SK-N-SH (cell line): ENCODE measurements at regions of chr17 and their contacts with region 1.

Region 1: GRCh38 chr17:81959362-81960129 is 1.4 kb downstream of the NOTUM start:
- DNase-seq: peak; percentile 96
- H3K4me3 ChIP-seq: peak overlapping the region; percentile 40 to 49
- H3K27ac ChIP-seq: no peak overlapping the region
- H3K4me1 ChIP-seq: peaks cover 0 to 25% of the 10 kb centered on the region in 2 experiments; a peak in 1 of 4 replicates
- H3K27me3 ChIP-seq: peaks cover 18% of the 10 kb centered on the region
- CTCF ChIP-seq: peak; percentile 62
- EP300 ChIP-seq: peak in 1 of 2 experiments; percentile 17; a peak in 1 of 4 replicates
- RAD21 ChIP-seq: peak; percentile 92

Region 2: DNA sequence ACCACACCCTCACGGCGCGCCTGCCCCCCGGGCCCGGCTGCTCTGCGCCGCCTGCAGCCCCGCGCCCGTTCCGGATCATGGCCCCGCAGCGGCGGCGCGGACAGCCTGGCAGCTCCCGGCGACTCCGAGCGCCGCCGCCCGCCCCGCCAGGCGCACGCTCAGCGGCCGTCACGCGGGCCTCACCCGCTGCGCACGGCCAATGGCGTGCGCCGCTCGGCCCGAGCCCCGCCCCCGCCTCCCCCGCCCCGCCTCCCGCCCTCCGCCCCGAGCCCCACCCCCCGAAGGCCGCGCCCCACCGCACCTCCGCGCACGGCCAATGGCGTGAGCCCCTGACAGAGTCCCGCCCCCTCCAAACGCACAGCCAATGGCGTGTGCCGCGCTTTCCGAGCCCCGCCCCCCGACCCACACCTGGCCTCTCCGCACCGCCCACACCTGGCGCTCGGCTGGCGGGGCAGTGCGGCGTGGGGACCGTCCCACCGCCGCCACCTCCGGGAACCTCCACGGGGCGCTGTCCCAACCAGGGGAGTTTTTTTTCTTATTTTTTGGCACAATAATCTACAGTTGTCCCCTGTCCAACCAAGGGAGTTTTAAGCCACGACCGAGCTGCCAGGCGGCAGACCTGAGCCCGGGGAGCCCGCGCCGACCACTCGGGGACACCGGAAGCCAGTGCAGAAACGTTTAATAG is 48.1 kb before region 1 on chr17 and contains the start of gene PCYT2:
- CTCF ChIA-PET with region 1: interaction called, 14 read pairs
- POLR2A ChIA-PET with region 1: no interaction called
- DNase-seq: peak; percentile 100
- H3K4me3 ChIP-seq: peak within 1 kb of the TSS; percentile 85 to 96
- H3K27ac ChIP-seq: peak within 1 kb of the TSS in 1 of 2 experiments; percentile 44; a peak in 2 of 4 replicates
- H3K4me1 ChIP-seq: peaks cover 8 to 19% of the 10 kb centered on the region in 2 experiments; a peak in 2 of 4 replicates
- H3K27me3 ChIP-seq: no peaks in the 10 kb centered on the region
- CTCF ChIP-seq: peak; percentile 10; the same call in 1 of the 2 replicates
- EP300 ChIP-seq: no peak
- RAD21 ChIP-seq: no peak
- polyA plus RNA-seq, gene PCYT2: 46.2 and 54.1 TPM in 2 replicates

Region 3: DNA sequence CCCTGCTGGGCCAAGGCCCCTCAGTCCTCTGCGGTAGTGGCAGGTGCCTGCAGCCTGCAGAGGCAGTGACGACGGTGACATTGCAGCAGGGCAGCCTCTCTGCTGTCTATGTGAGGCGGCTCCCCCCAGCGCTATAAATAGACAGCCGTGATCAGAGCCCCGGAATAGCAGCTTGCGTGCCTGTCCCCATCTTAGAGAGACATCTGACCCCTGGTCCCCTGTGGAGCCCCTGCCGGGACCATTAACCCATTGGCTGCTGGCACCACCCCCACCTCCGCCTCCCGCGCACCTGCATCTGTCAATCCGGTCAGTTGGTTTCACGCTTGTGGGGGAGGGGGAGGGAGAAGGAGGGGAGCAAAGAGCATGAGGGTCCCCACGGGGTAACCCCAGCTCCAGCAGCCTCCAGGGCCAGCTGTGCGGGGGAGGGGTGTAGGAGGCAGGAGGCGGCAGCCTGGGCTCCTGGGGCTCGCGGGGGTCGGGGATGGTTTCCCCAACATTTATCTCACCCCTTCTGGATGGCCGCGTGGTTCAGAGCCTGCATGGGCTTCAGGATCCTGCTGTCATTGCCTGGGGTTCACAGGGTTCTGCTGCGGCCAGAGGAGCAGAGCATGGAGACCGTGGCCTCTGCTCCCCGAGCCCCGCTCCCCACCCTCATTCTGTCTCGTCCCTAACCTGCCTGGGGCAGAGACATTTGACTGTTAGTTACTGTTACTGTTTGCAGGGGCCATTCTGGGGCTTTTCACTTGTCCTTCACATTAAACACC is 17.6 kb before region 1 on chr17:
- CTCF ChIA-PET with region 1: interaction called, 216 read pairs
- POLR2A ChIA-PET with region 1: interaction called, 11 read pairs
- DNase-seq: no peak
- H3K4me3 ChIP-seq: no peak overlapping the region
- H3K27ac ChIP-seq: no peak overlapping the region
- H3K4me1 ChIP-seq: peaks cover 0 to 2% of the 10 kb centered on the region in 2 experiments; a peak in 1 of 4 replicates
- H3K27me3 ChIP-seq: no peaks in the 10 kb centered on the region
- CTCF ChIP-seq: no peak
- EP300 ChIP-seq: no peak
- RAD21 ChIP-seq: no peak

Region 4: GRCh38 chr17:82003411-82004381 is 44.1 kb after region 1 on chr17:
- CTCF ChIA-PET with region 1: interaction called, 1,216 read pairs
- POLR2A ChIA-PET with region 1: no interaction called
- DNase-seq: no peak
- H3K4me3 ChIP-seq: no peak overlapping the region; a peak in 1 of 4 replicates
- H3K27ac ChIP-seq: peak overlapping the region; percentile 41 to 90
- H3K4me1 ChIP-seq: peaks cover 16 to 44% of the 10 kb centered on the region in 2 experiments; a peak in 3 of 4 replicates
- H3K27me3 ChIP-seq: no peaks in the 10 kb centered on the region
- CTCF ChIP-seq: peak; percentile 23
- EP300 ChIP-seq: peak in 1 of 2 experiments; percentile 90; a peak in 2 of 4 replicates
- RAD21 ChIP-seq: no peak

Region 5: GRCh38 chr17:82058230-82058854 is 98.8 kb after region 1 on chr17:
- CTCF ChIA-PET with region 1: interaction called, 10 read pairs
- POLR2A ChIA-PET with region 1: no interaction called
- DNase-seq: no peak
- H3K4me3 ChIP-seq: no peak overlapping the region
- H3K27ac ChIP-seq: peak overlapping the region in 1 of 2 experiments; percentile 48; a peak in 1 of 4 replicates
- H3K4me1 ChIP-seq: peaks cover 0 to 10% of the 10 kb centered on the region in 2 experiments; a peak in 2 of 4 replicates
- H3K27me3 ChIP-seq: no peaks in the 10 kb centered on the region
- CTCF ChIP-seq: no peak
- EP300 ChIP-seq: no peak
- RAD21 ChIP-seq: no peak